AG04450 (cell line): ENCODE measurements at regions of chr6 and their contacts with region 1.

Region 1: GRCh38 chr6:1554476-1555310 is 55.0 kb upstream of the FOXC1 start:
- DNase-seq: no peak
- H3K4me3 ChIP-seq: peak overlapping the region; percentile 63
- H3K27ac ChIP-seq: peak overlapping the region; percentile 31
- H3K27me3 ChIP-seq: peaks cover 2% of the 10 kb centered on the region
- CTCF ChIP-seq: peak; percentile 67

Region 2: DNA sequence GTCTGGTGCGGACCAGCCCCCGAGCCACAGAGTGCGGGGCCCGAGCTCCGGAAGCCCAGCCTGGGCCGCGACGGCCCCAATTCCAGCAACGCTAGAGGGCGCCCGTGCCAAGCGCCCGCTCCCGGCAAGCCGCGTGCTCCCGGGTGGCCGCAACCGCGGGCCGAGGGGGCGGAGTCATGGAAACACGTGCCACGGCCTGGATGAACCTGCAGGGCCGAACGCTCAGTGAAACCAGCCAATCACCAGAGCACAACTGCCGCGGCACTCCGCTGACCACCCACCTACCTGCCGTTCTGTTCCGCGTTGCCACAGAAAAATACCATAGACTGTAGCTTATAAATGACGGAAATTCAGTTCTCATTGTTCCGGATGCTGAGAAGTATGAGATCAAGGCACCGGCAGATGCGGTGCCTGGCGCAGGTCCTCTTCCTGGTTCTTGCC is 30.6 kb before region 1 on chr6:
- CTCF ChIA-PET with region 1: interaction called, 13 read pairs
- POLR2A ChIA-PET with region 1: no interaction called
- DNase-seq: no peak
- H3K4me3 ChIP-seq: no peak overlapping the region
- H3K27ac ChIP-seq: no peak overlapping the region
- H3K27me3 ChIP-seq: peaks cover 18% of the 10 kb centered on the region
- CTCF ChIP-seq: peak; percentile 51